Activated T-helper 1 cell treated with anti-CD3 and anti-CD28 coated beads, Interleukin-12 subunit alpha, Interleukin-12 subunit beta, Interleukin-2, Interleukin-4 antibody, amounts not matched to agents 30 ng/mL and 10 ng/mL and 1 ng/mL, durations not matched to agents 14 hours and 24 hours and 36 hours (primary cell): ENCODE measurements at regions of chr1 and their contacts with region 1.

Region 1: GRCh38 chr1:108512239-108512981 is 47.5 kb upstream of the EEIG2 start:
- DNase-seq: no peak
- H3K4me3 Mint-ChIP-seq: no peak overlapping the region
- H3K27ac Mint-ChIP-seq: no peak overlapping the region
- H3K4me1 Mint-ChIP-seq: no peaks in the 10 kb centered on the region
- H3K27me3 Mint-ChIP-seq: peaks cover 46% of the 10 kb centered on the region

Region 2: DNA sequence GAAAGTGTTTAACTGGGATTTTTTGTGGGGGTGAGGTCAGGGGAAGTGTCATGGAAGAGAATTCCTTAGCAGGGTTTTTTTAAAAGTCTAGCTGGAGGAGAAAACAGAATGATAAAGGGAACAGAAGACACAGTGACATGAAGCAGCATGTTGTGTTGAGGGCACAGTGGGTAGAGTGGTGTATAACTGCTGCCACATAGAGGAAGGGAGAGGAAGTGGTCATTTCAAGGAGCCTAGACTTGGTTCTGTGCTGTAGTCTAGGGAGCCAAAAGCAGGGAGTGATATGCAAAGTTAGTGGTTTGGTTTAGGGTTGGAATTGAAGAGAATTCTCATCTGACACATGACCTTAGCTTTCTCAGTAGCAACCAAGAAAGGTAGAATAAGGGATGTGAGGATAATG is 57.7 kb after region 1 on chr1:
- intact Hi-C with region 1: loop called (anchors 2 kb)
- DNase-seq: no peak
- H3K4me3 Mint-ChIP-seq: no peak overlapping the region
- H3K27ac Mint-ChIP-seq: no peak overlapping the region
- H3K4me1 Mint-ChIP-seq: peaks cover under 1% of the 10 kb centered on the region
- H3K27me3 Mint-ChIP-seq: no peaks in the 10 kb centered on the region

Region 3: GRCh38 chr1:108708691-108709660 is 196.6 kb after region 1 on chr1:
- intact Hi-C with region 1: loop called (anchors 5 kb)
- DNase-seq: peak; percentile 40
- H3K4me3 Mint-ChIP-seq: no peak overlapping the region
- H3K27ac Mint-ChIP-seq: no peak overlapping the region
- H3K4me1 Mint-ChIP-seq: peaks cover 32% of the 10 kb centered on the region
- H3K27me3 Mint-ChIP-seq: peaks cover 11% of the 10 kb centered on the region

Region 4: DNA sequence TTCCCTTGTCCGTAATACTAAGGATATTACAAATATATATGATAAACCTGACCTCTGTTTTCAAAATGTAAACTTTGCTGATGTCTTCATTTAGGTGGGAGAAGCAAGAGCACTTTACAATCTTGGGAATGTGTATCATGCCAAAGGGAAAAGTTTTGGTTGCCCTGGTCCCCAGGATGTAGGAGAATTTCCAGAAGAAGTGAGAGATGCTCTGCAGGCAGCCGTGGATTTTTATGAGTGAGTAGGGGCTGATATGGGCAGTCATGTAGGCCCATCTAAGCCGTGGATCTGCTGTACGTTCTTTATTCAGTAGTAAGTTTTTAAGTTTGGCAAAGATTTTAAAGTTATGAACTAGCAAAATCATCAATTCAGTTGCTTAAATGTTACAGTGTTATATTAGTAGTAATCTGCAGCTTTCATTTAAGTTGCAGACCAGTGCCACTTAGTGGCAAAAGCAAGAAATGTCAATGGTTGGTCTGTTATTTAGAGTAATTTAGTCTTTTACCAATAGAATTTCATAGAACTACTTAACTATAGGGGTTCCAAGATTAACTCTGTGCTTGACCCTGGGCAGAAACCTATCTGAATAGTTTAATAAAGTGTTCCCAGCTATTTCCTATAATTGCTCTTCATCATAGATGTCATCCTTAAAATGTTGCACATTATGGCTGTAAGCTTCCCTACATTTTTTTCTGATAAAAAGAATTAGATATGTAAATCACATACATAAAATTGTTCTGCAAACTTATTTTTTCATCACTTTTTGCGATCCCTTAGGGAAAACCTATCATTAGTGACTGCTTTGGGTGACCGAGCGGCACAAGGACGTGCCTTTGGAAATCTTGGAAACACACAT is 385.7 kb after region 1 on chr1:
- intact Hi-C with region 1: loop called (anchors 5 kb)
- DNase-seq: peak; percentile 10
- H3K4me3 Mint-ChIP-seq: no peak overlapping the region
- H3K27ac Mint-ChIP-seq: no peak overlapping the region
- H3K4me1 Mint-ChIP-seq: no peaks in the 10 kb centered on the region
- H3K27me3 Mint-ChIP-seq: no peaks in the 10 kb centered on the region

Region 5: DNA sequence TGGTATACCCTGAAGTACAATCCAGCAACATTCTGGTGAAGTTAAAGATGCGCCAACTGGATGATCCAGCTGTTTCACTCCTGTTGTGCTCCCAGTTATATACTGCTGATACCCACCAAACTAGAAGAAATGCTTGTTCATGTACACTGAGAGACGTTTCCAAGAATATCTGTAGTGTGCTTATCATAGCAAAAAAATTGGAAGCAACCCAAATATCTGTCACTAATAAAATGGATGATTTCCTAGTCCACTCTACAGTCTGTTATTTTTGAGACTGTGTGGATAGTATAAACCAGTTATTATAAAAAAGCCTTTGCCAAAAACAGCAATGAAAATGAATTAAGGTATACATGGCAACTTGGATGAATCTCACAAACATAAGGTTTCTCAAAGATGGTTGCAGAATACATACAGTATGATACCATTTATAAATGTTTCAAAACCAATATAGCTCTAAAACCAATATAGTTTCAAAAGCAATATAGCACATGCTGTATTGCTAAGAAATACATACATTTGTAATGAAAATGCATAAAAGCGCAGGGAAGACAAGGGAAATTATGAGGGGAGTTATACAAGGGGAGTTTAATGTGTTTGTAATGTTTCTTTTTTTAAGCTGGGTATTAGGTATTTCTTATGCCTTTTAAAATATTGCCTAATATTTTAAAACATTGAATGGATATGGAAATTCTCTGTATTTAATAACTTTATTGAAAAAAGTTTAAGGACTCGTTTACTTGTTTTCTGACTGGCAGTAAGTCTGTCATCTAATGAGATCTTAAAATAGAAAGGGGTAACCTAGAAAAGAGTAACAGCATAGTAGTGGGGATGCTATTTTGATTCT is 400.9 kb after region 1 on chr1:
- intact Hi-C with region 1: no loop called
- DNase-seq: no peak
- H3K4me3 Mint-ChIP-seq: no peak overlapping the region
- H3K27ac Mint-ChIP-seq: no peak overlapping the region
- H3K4me1 Mint-ChIP-seq: no peaks in the 10 kb centered on the region
- H3K27me3 Mint-ChIP-seq: no peaks in the 10 kb centered on the region